ENCODE measurements at regions of chr3 and their contacts with region 1.

Region 1: GRCh38 chr3:14921078-14921616 is 26.2 kb upstream of the NR2C2 start:
- DNase-seq: no peak
- ATAC-seq: peak; percentile 97
- H3K4me3 ChIP-seq: no peak overlapping the region
- H3K27ac ChIP-seq: no peak overlapping the region
- H3K4me1 ChIP-seq: no peaks in the 10 kb centered on the region
- H3K27me3 ChIP-seq: no peaks in the 10 kb centered on the region
- CTCF ChIP-seq: peak; percentile 97 to 99 (median 98); a peak in 5 of 6 replicates
- EP300 ChIP-seq: no peak
- POLR2A ChIP-seq: no peak
- RAD21 ChIP-seq: peak; percentile 98

Region 2: GRCh38 chr3:14508961-14509795 is 412.0 kb before region 1 on chr3:
- CTCF ChIA-PET with region 1: interaction called, 17 read pairs
- POLR2A ChIA-PET with region 1: no interaction called
- RAD21 ChIA-PET with region 1: interaction called, 10 read pairs
- SMC1A ChIA-PET with region 1: interaction called, 7 read pairs
- in situ Hi-C with region 1: no loop called
- intact Hi-C with region 1: loop called (anchors 1 kb)
- DNase-seq: no peak
- ATAC-seq: peak; percentile 93
- H3K4me3 ChIP-seq: no peak overlapping the region
- H3K27ac ChIP-seq: no peak overlapping the region
- H3K4me1 ChIP-seq: no peaks in the 10 kb centered on the region
- H3K27me3 ChIP-seq: no peaks in the 10 kb centered on the region; a peak in 1 of 4 replicates
- CTCF ChIP-seq: peak; percentile 71 to 88 (median 73)
- EP300 ChIP-seq: no peak
- POLR2A ChIP-seq: no peak
- RAD21 ChIP-seq: peak; percentile 54

Region 3: DNA sequence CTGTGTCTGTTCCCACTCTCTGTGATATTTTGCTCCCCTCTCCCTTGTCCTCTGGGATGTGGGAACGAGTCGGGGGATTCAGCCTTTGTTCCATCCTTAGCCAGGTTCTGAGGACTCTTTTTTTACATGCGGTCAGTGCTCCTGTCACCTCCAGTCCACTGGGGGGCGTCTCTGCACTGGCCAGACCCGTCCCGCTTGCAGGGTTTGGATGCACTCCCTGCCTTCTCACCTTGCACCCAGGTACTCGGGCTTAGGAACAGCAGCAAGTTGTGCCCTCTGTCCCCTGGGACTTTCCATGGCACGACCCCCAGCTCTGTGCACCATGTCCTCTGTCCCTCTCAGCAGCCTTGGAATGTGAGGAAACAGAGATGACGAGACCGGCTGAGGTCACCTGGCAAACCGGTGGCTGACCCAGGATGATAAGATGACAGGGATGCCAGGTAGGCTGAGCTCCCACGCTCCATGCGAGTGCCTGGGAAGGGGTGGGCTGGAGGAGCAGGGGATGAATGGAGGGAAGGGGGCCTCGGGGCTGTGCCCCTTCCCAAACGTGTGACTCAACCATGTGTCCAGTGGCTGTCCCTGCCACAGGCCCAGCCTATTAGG is 129.7 kb before region 1 on chr3:
- CTCF ChIA-PET with region 1: interaction called, 46 read pairs
- POLR2A ChIA-PET with region 1: no interaction called
- RAD21 ChIA-PET with region 1: interaction called, 47 read pairs
- SMC1A ChIA-PET with region 1: interaction called, 13 read pairs
- in situ Hi-C with region 1: loop called (anchors 5 kb)
- intact Hi-C with region 1: loop called (anchors 1 kb)
- DNase-seq: no peak
- ATAC-seq: peak; percentile 91
- H3K4me3 ChIP-seq: no peak overlapping the region
- H3K27ac ChIP-seq: no peak overlapping the region
- H3K4me1 ChIP-seq: no peaks in the 10 kb centered on the region
- H3K27me3 ChIP-seq: no peaks in the 10 kb centered on the region; a peak in 1 of 4 replicates
- CTCF ChIP-seq: peak; percentile 63 to 76 (median 76)
- EP300 ChIP-seq: no peak
- POLR2A ChIP-seq: no peak
- RAD21 ChIP-seq: peak; percentile 80

Region 4: GRCh38 chr3:14933820-14934425 is 12.8 kb after region 1 on chr3:
- CTCF ChIA-PET with region 1: interaction called, 11 read pairs
- POLR2A ChIA-PET with region 1: no interaction called
- RAD21 ChIA-PET with region 1: interaction called, 4 read pairs
- SMC1A ChIA-PET with region 1: interaction called, 3 read pairs
- in situ Hi-C with region 1: no loop called
- intact Hi-C with region 1: no loop called
- DNase-seq: no peak
- ATAC-seq: no peak
- H3K4me3 ChIP-seq: no peak overlapping the region
- H3K27ac ChIP-seq: no peak overlapping the region
- H3K4me1 ChIP-seq: no peaks in the 10 kb centered on the region
- H3K27me3 ChIP-seq: no peaks in the 10 kb centered on the region; a peak in 1 of 4 replicates
- CTCF ChIP-seq: no peak
- EP300 ChIP-seq: no peak
- POLR2A ChIP-seq: no peak
- RAD21 ChIP-seq: no peak

Region 5: GRCh38 chr3:15098503-15099363 is 177.6 kb after region 1 on chr3 and contains the start of gene RBSN:
- CTCF ChIA-PET with region 1: no interaction called
- POLR2A ChIA-PET with region 1: no interaction called
- RAD21 ChIA-PET with region 1: interaction called, 4 read pairs
- SMC1A ChIA-PET with region 1: no interaction called
- in situ Hi-C with region 1: no loop called
- intact Hi-C with region 1: loop called (anchors 1 kb)
- DNase-seq: peak; percentile 75
- ATAC-seq: peak; percentile 90
- H3K4me3 ChIP-seq: peak within 1 kb of the TSS; percentile 98
- H3K27ac ChIP-seq: peak within 1 kb of the TSS; percentile 69
- H3K4me1 ChIP-seq: peaks cover 8% of the 10 kb centered on the region
- H3K27me3 ChIP-seq: no peaks in the 10 kb centered on the region
- CTCF ChIP-seq: no peak
- EP300 ChIP-seq: peak in 1 of 2 experiments; percentile 14; a peak in 3 of 4 replicates
- POLR2A ChIP-seq: peak; percentile 93
- RAD21 ChIP-seq: no peak
- polyA plus RNA-seq, gene RBSN: 2.0 to 2.1 TPM

Region 6: GRCh38 chr3:15148614-15149013 is 227.5 kb after region 1 on chr3:
- CTCF ChIA-PET with region 1: no interaction called
- POLR2A ChIA-PET with region 1: no interaction called
- RAD21 ChIA-PET with region 1: no interaction called
- SMC1A ChIA-PET with region 1: no interaction called
- in situ Hi-C with region 1: no loop called
- intact Hi-C with region 1: no loop called
- DNase-seq: no peak
- ATAC-seq: peak; percentile 56
- H3K4me3 ChIP-seq: no peak overlapping the region
- H3K27ac ChIP-seq: no peak overlapping the region
- H3K4me1 ChIP-seq: no peaks in the 10 kb centered on the region
- H3K27me3 ChIP-seq: peaks cover 0 to 5% of the 10 kb centered on the region in 2 experiments; a peak in 2 of 4 replicates
- CTCF ChIP-seq: 0 out of 6 replicates have a peak, but pooled peaks of 1 of the 3 experiments have one; percentile 17
- EP300 ChIP-seq: no peak
- POLR2A ChIP-seq: no peak
- RAD21 ChIP-seq: no peak